AG04450 (cell line): ENCODE measurements at regions of chr22 and their contacts with region 1.

Region 1: GRCh38 chr22:35394011-35394312 is 6.0 kb upstream of the MCM5 start:
- DNase-seq: no peak
- H3K4me3 ChIP-seq: no peak overlapping the region
- H3K27ac ChIP-seq: no peak overlapping the region
- H3K27me3 ChIP-seq: no peaks in the 10 kb centered on the region
- CTCF ChIP-seq: no peak

Region 2: GRCh38 chr22:35288116-35288515 is 105.8 kb before region 1 on chr22:
- CTCF ChIA-PET with region 1: no interaction called
- POLR2A ChIA-PET with region 1: no interaction called
- DNase-seq: no peak
- H3K4me3 ChIP-seq: no peak overlapping the region
- H3K27ac ChIP-seq: no peak overlapping the region
- H3K27me3 ChIP-seq: no peaks in the 10 kb centered on the region
- CTCF ChIP-seq: no peak

Region 3: DNA sequence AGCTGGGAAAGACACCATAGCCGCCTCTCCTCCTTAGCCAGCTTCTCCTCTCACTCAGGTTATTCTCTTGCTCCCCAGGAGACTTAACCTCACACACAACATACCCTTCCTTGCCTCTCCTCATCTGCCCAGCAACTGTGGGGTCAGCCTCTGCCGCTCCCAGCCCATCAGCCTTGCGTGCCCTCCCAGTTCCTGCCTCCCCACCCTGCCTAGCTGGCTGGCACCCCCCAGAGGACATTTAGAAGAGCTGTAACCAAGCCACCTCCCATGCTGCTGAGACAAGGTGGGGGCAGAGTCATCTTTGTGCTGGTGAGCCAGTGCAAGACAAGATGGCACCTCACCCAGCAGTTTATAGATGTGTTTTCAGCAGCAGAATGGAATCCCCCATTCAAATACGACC is 56.0 kb before region 1 on chr22:
- CTCF ChIA-PET with region 1: no interaction called
- POLR2A ChIA-PET with region 1: no interaction called
- DNase-seq: no peak
- H3K4me3 ChIP-seq: no peak overlapping the region
- H3K27ac ChIP-seq: no peak overlapping the region
- H3K27me3 ChIP-seq: no peaks in the 10 kb centered on the region
- CTCF ChIP-seq: no peak

Region 4: DNA sequence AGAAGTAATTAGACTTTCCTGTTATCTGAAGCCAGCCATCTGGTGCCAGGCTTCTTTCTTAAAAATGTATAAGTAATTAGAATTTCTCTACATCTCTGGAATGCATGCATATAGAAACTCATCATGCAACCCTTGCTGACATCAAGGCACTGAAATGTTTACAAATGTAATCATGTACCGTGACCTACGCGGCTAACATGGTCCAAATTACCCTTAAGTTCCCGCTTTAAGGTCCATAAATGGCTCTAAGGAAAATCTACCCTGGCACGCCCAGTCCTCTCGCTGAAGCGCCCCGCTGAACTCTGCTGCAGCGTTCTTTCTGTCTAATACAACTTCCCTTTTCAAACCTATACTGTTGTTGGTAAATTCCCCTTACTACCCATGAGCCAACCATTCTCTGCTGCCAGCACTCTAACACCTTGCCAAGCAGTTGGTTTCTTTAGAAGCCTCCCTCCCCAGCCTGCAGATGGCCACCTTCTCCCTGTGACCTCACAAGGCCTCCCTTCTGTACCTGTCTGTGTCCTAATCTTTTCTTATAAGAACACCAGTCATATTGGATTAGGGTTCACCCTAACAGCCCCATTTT is 26.6 kb before region 1 on chr22:
- CTCF ChIA-PET with region 1: interaction called, 10 read pairs
- POLR2A ChIA-PET with region 1: interaction called, 11 read pairs
- DNase-seq: no peak
- H3K4me3 ChIP-seq: no peak overlapping the region
- H3K27ac ChIP-seq: no peak overlapping the region
- H3K27me3 ChIP-seq: no peaks in the 10 kb centered on the region
- CTCF ChIP-seq: no peak

Region 5: GRCh38 chr22:35376728-35377472 is 17.1 kb before region 1 on chr22:
- CTCF ChIA-PET with region 1: no interaction called
- POLR2A ChIA-PET with region 1: interaction called, 11 read pairs
- DNase-seq: peak; percentile 97
- H3K4me3 ChIP-seq: no peak overlapping the region
- H3K27ac ChIP-seq: peak overlapping the region; percentile 94
- H3K27me3 ChIP-seq: no peaks in the 10 kb centered on the region
- CTCF ChIP-seq: no peak